Keratinocyte (primary cell): ENCODE measurements at regions of chr1 and their contacts with region 1.

Region 1: DNA sequence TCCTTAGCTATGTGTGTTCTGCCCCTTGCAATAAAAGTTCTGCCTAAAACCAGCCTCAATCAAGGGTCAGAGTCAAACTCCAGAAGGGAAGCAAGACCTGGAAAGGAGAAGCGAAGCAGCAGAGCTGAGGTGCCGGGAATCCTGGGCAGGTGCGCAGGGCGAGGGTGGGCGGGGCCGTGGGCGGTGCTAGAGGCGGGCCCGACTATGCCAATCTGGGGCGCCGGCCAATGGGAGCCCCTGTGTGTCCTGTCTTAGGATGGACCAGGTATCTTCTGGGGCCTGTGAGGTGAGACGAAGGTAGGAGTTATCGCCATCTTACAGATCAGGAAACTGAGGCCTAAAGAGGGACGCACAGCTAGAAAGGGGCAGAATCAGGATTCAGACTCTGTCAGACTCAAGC is 120.3 kb downstream of the PTPRU start:
- DNase-seq: no peak
- H3K4me3 ChIP-seq: no peak overlapping the region
- H3K27ac ChIP-seq: no peak overlapping the region
- H3K4me1 ChIP-seq: peaks cover 8% of the 10 kb centered on the region
- H3K27me3 ChIP-seq: no peaks in the 10 kb centered on the region
- CTCF ChIP-seq: no peak

Region 2: GRCh38 chr1:29105839-29106238 is 250.8 kb before region 1 on chr1:
- dilution Hi-C with region 1: no loop called
- DNase-seq: no peak
- H3K4me3 ChIP-seq: no peak overlapping the region
- H3K27ac ChIP-seq: no peak overlapping the region
- H3K4me1 ChIP-seq: no peaks in the 10 kb centered on the region
- H3K27me3 ChIP-seq: no peaks in the 10 kb centered on the region
- CTCF ChIP-seq: no peak

Region 3: GRCh38 chr1:29230553-29231378 is 125.9 kb before region 1 on chr1 and contains the start of gene MECR:
- dilution Hi-C with region 1: loop called (anchors 25 kb)
- DNase-seq: peak; percentile 58
- H3K4me3 ChIP-seq: peak within 1 kb of the TSS; percentile 84 to 95 (median 91)
- H3K27ac ChIP-seq: peak within 1 kb of the TSS; percentile 83
- H3K4me1 ChIP-seq: peaks cover 13% of the 10 kb centered on the region
- H3K27me3 ChIP-seq: no peaks in the 10 kb centered on the region
- CTCF ChIP-seq: peak in 1 of 3 experiments; percentile 45
- polyA plus RNA-seq, gene MECR: 20.7 to 29.9 TPM (median 23.0 TPM) in 3 replicates

Region 4: GRCh38 chr1:29282924-29283811 is 73.5 kb before region 1 on chr1:
- dilution Hi-C with region 1: no loop called
- DNase-seq: no peak
- H3K4me3 ChIP-seq: no peak overlapping the region
- H3K27ac ChIP-seq: no peak overlapping the region
- H3K4me1 ChIP-seq: peaks cover 16% of the 10 kb centered on the region
- H3K27me3 ChIP-seq: no peaks in the 10 kb centered on the region
- CTCF ChIP-seq: no peak